Mammary epithelial cell (primary cell): ENCODE measurements at regions of chr11 and their contacts with region 1.

Region 1: DNA sequence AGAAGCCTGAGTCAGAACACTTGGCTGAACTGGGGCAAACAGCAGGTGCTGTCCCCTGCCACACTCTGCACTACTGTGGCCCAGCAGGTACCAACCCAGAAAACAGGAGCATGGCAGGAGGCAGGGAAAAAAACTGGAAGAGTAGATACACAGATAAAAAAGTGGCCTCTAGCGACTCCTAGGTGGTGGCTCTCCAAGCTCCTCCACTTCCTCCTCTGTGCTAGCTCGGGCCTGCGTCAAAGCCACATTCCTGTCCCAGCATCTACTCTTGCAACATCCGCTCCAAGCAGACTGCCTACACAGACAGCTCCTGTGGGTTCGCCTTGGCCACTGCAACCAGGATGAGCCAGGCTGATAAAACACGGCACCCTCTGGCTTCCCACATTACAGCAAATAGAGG is 6.9 kb downstream of the OR8B12 start:
- DNase-seq: peak; percentile 55
- H3K4me3 ChIP-seq: no peak overlapping the region
- H3K27ac ChIP-seq: no peak overlapping the region
- H3K4me1 ChIP-seq: peaks cover 14% of the 10 kb centered on the region
- H3K27me3 ChIP-seq: no peaks in the 10 kb centered on the region
- CTCF ChIP-seq: peak in 1 of 2 donors; percentile 20

Region 2: DNA sequence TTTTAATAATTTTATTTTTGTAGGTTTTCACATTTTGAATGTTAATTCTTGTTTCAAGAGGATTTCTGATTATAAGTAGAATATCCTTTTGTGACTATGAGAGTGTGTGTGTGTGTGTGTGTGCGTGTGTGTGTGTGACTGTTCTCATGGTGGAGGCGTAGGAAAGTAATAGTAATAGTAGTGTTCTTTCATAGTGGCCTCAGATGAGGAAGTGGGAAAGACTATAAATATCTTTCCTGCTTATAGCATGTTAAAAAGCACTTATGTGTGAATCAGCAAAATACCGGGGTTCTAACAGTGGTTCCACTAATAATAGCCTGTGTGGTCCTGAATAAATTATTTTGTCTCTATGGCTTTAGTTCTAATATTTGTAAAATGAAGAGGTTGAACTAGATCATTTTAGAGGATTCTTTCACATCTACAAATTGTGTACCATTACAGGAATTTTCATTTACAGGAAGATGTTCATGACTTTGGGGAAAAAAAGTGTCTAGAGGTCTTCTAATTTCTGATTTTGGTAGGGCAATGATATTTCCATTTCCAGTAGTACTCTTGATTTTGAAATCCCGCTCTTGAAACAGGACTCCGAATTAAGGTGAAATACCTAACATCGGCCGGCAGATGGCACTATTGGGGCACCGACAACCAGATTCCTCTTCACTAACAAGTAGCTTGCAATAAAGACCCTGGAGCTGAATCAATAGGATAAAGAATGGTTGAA is 465.4 kb before region 1 on chr11:
- CTCF ChIA-PET with region 1: no interaction called
- dilution Hi-C with region 1: no loop called
- in situ Hi-C with region 1: no loop called
- intact Hi-C with region 1: no loop called
- DNase-seq: peak; percentile 50
- H3K4me3 ChIP-seq: no peak overlapping the region
- H3K27ac ChIP-seq: no peak overlapping the region
- H3K4me1 ChIP-seq: peaks cover 11% of the 10 kb centered on the region
- H3K27me3 ChIP-seq: no peaks in the 10 kb centered on the region
- CTCF ChIP-seq: peak; percentile 68 to 71

Region 3: DNA sequence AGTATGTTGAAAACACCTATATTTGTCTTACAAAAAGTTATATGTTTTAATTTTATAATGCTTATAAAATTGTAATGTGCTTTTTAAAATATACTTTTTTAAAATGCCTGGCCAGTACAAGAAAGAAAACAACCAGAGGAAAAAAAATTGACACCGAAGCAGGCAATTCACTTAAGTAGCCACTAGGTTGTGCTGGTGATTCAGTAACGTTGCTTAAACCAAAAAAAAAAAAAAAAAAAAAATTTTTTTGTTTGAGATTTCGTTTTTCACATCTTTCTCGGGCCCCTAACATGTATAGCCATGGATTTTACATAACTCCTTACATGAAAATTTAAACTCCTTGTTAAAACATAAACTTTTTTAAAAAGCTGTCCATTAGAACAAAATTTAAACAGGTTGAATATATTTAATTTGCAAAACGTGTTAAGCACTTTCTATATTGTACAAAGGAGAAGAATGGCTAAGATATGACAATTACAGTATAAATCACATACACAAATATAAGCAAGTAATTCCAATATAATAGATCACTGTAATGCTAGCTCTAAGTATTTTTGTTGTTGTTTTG is 121.1 kb before region 1 on chr11:
- CTCF ChIA-PET with region 1: no interaction called
- dilution Hi-C with region 1: no loop called
- in situ Hi-C with region 1: no loop called
- intact Hi-C with region 1: loop called (anchors 5 kb)
- DNase-seq: no peak
- H3K4me3 ChIP-seq: no peak overlapping the region
- H3K27ac ChIP-seq: no peak overlapping the region
- H3K4me1 ChIP-seq: no peaks in the 10 kb centered on the region
- H3K27me3 ChIP-seq: peaks cover 4% of the 10 kb centered on the region
- CTCF ChIP-seq: peak; percentile 47 to 70

Region 4: GRCh38 chr11:124481365-124482323 is 54.9 kb before region 1 on chr11:
- CTCF ChIA-PET with region 1: no interaction called
- dilution Hi-C with region 1: no loop called
- in situ Hi-C with region 1: no loop called
- intact Hi-C with region 1: loop called (anchors 2 kb)
- DNase-seq: peak; percentile 7
- H3K4me3 ChIP-seq: peak overlapping the region; percentile 22 to 57 (median 31)
- H3K27ac ChIP-seq: peak overlapping the region; percentile 3
- H3K4me1 ChIP-seq: peaks cover 17% of the 10 kb centered on the region
- H3K27me3 ChIP-seq: no peaks in the 10 kb centered on the region
- CTCF ChIP-seq: no peak

Region 5: DNA sequence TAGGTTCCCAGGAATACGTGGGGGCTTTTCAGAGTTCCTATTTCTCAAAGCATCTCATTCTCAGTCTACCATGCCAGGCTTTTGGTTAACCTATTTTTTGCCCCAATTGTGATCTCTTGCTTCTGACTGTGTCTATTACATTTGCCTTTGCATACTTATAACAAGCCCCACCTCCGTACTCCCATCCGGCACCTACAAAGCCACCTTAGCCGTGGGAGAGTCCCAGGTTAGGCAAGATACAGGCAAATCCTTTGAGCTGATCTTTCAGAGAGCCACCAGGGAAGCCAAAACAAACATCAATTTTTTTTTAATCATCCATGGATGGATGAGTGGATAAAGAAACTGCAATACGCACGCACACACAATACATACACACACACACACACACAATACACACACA is 56.1 kb after region 1 on chr11:
- CTCF ChIA-PET with region 1: no interaction called
- dilution Hi-C with region 1: no loop called
- in situ Hi-C with region 1: no loop called
- intact Hi-C with region 1: no loop called
- DNase-seq: no peak
- H3K4me3 ChIP-seq: no peak overlapping the region
- H3K27ac ChIP-seq: no peak overlapping the region
- H3K4me1 ChIP-seq: no peaks in the 10 kb centered on the region
- H3K27me3 ChIP-seq: no peaks in the 10 kb centered on the region
- CTCF ChIP-seq: no peak